ENCODE measurements at regions of chr3 and their contacts with region 1.

Region 1: GRCh38 chr3:99499235-99500158 is 138.9 kb upstream of the COL8A1 start:
- DNase-seq: peak; percentile 34 to 63 (median 49)
- H3K4me3 ChIP-seq: no peak overlapping the region
- H3K27ac ChIP-seq: no peak overlapping the region
- H3K4me1 ChIP-seq: no peaks in the 10 kb centered on the region
- H3K27me3 ChIP-seq: peaks cover 0 to 18% (median 5%) of the 10 kb centered on the region in 5 experiments

Region 2: GRCh38 chr3:99532246-99532645 is 32.7 kb after region 1 on chr3:
- CTCF ChIA-PET with region 1: interaction called, 12 read pairs
- POLR2A ChIA-PET with region 1: interaction called, 3 read pairs
- DNase-seq: peak in 2 of 3 donors; percentile 15 to 28
- H3K4me3 ChIP-seq: no peak overlapping the region
- H3K27ac ChIP-seq: no peak overlapping the region
- H3K4me1 ChIP-seq: no peaks in the 10 kb centered on the region
- H3K27me3 ChIP-seq: peaks cover 0 to 3% (median 0%) of the 10 kb centered on the region in 5 experiments

Region 3: DNA sequence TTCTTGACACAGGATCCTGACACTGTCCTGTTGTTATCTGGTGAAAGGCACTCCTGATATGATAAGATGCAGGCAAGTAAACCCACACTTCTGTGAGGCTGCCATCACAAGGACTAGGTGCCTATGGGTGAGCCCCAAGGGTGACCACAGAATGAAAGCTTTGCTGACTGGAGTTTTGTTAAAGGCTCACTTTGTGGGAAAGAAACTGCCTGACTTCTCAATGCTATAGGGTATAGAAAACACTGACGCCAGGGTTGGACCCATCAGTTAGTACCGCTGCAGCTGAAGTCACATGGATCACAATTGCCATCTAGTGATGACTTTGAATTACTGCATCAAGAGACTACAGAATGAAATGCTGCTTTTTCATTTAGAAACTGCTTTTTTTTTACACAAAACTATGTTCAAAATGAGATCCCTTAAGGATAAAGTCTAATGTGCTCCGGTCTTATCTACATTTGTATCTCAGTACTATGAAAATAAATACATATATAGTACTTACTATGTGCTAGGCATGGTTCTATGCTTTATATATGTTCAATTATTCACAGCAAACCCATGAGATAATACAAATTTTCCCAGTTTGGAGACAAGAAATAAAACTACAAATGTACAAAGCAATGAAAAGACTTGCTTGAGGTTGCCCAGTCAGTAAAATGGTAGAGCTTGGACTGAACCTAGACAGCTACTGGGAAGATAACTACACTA is 253.9 kb after region 1 on chr3:
- CTCF ChIA-PET with region 1: interaction called, 17 read pairs
- POLR2A ChIA-PET with region 1: no interaction called
- DNase-seq: peak; percentile 49 to 78 (median 76)
- H3K4me3 ChIP-seq: no peak overlapping the region
- H3K27ac ChIP-seq: no peak overlapping the region
- H3K4me1 ChIP-seq: no peaks in the 10 kb centered on the region
- H3K27me3 ChIP-seq: peaks cover 0 to 3% (median 2%) of the 10 kb centered on the region in 5 experiments

Measured in common myeloid progenitor, CD34-positive (primary cell).